Activated T-helper 1 cell treated with anti-CD3 and anti-CD28 coated beads, Interleukin-12 subunit alpha, Interleukin-12 subunit beta, Interleukin-2, Interleukin-4 antibody, amounts not matched to agents 30 ng/mL and 10 ng/mL and 1 ng/mL, durations not matched to agents 14 hours and 24 hours and 36 hours (primary cell): ENCODE measurements at regions of chr10 and their contacts with region 1.

Region 1: GRCh38 chr10:24642622-24643417 is 80.9 kb downstream of the ARHGAP21 start:
- DNase-seq: no peak
- H3K4me3 Mint-ChIP-seq: no peak overlapping the region
- H3K27ac Mint-ChIP-seq: no peak overlapping the region
- H3K4me1 Mint-ChIP-seq: no peaks in the 10 kb centered on the region
- H3K27me3 Mint-ChIP-seq: no peaks in the 10 kb centered on the region

Region 2: GRCh38 chr10:24882047-24882698 is 239.4 kb after region 1 on chr10:
- intact Hi-C with region 1: loop called (anchors 10 kb)
- DNase-seq: peak; percentile 15
- H3K4me3 Mint-ChIP-seq: peak overlapping the region; percentile 19
- H3K27ac Mint-ChIP-seq: no peak overlapping the region
- H3K4me1 Mint-ChIP-seq: peaks cover 30% of the 10 kb centered on the region
- H3K27me3 Mint-ChIP-seq: no peaks in the 10 kb centered on the region

Region 3: DNA sequence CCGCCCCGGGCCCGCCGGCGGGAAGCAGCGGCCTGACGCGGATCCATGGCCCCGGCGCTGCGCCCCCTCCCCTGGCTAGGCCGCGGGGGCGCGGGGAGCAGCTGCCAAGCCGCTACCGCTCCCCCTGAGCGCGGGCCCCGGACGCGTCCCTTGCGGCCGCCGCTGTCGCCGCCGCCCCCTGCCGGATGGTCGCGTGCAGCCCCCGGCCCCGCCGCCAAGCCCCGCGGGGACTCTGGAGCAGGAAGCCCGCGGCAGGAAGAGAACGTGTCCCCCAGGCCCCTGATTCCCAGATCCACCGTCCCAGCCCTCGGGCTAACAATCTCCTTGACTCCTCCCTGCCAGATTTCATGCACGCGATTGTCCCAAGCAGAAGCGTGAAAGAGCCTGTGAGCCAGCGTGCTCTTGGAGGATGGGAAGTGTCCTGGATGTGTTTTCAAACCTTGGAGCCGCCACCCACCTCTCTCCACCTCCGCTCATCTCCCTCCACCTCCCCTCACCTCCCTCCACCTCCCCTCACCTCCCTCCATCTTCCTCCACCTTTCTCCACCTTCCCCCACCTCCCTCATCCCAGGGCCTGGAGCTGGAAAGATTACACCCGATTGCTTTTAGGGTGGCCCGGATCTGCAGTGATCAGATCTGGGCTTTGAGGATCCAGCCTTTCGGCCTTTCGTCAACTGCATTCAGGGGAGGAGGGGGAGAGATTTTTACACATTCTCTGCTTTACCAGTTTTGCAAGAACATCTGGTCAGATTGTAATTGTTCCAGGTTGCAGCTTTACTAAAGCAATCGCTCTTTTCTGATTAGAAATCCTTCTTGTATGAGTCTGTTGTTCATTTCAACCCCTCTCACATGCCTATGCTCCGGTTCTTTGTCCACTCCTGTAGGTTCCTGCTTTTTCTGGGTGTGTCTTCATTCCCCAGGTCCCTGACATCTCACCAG is 310.2 kb after region 1 on chr10:
- intact Hi-C with region 1: loop called (anchors 5 kb)
- DNase-seq: peak; percentile 7
- H3K4me3 Mint-ChIP-seq: peak overlapping the region; percentile 79
- H3K27ac Mint-ChIP-seq: no peak overlapping the region
- H3K4me1 Mint-ChIP-seq: peaks cover 16% of the 10 kb centered on the region
- H3K27me3 Mint-ChIP-seq: no peaks in the 10 kb centered on the region

Region 4: DNA sequence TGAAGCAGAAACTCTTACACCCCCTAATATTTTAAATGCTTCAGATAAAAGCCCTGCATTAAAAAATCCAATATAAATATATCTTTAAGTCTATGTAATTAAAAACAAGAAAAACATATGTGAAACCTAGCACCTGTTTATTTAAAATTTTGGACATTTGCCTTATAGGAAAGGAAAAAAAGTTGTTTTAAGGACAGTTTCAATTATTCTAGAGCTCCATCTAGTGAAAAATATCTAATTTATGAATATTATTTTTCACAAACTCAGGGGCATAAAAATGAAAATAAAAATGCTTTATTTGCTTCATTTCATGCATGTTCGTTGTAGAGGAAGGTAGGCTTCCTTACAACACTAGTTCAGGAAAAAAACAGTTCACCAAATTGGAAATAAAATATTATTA is 347.0 kb after region 1 on chr10:
- intact Hi-C with region 1: loop called (anchors 1 kb)
- DNase-seq: no peak
- H3K4me3 Mint-ChIP-seq: no peak overlapping the region
- H3K27ac Mint-ChIP-seq: no peak overlapping the region
- H3K4me1 Mint-ChIP-seq: no peaks in the 10 kb centered on the region
- H3K27me3 Mint-ChIP-seq: peaks cover 9% of the 10 kb centered on the region

Region 5: GRCh38 chr10:25080880-25081581 is 438.2 kb after region 1 on chr10:
- intact Hi-C with region 1: loop called (anchors 1 kb)
- DNase-seq: peak; percentile 45
- H3K4me3 Mint-ChIP-seq: no peak overlapping the region
- H3K27ac Mint-ChIP-seq: no peak overlapping the region
- H3K4me1 Mint-ChIP-seq: peaks cover 15% of the 10 kb centered on the region
- H3K27me3 Mint-ChIP-seq: peaks cover 20% of the 10 kb centered on the region

Region 6: DNA sequence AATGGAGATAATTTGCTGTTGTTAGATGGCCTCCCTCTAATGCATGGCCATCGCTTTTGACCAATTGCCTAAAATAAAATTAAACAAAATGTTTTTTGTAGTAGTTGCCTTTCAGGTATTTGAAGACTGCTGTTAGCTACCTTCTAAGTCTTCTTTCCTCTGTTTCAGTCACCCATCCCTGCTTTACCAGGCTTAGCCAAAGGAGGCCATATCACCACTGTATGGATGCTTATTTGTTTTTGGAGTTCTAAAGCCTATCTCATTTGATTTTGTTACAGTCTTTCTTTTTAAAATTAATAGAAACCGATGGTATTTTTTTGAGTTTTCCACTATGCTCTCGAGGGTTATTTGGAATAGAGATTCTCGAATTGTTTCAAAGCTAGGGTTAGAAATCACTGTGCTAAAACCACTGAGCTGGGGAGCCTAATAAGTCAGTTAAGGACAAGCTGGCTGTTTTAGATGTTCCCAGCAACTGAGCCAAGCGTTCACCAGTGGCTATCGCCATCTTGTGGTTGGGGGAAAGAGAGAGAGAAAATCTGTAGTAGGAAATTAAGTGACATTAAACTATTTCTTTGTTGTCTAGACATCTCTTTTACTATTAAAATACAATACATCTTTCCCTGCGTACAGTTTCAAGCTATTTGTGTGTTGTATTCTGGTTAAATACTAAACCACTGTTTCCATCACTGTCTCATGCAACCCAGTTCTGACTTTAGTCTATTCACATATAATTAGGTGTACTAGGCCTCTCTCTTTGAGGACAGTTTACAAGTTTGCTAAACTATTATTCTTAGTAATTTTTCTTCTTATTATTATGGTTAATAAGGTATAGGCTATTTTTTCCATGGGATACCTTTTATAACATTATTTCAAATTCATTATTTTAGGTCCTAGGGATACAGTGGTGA is 584.2 kb after region 1 on chr10:
- intact Hi-C with region 1: loop called (anchors 1 kb)
- DNase-seq: no peak
- H3K4me3 Mint-ChIP-seq: no peak overlapping the region
- H3K27ac Mint-ChIP-seq: no peak overlapping the region
- H3K4me1 Mint-ChIP-seq: no peaks in the 10 kb centered on the region
- H3K27me3 Mint-ChIP-seq: peaks cover 2% of the 10 kb centered on the region